Esophagus muscularis mucosa (tissue), 4 donors: ENCODE measurements at regions of chr9 and their contacts with region 1.

Region 1: GRCh38 chr9:112717661-112718341 is at the start of gene INIP:
- DNase-seq: peak; percentile 98
- H3K4me3 ChIP-seq: peak within 1 kb of the TSS; percentile 70 to 96 (median 83)
- H3K27ac ChIP-seq: peak within 1 kb of the TSS; percentile 83 to 93 (median 90)
- H3K4me1 ChIP-seq: peaks cover 14 to 22% (median 15%) of the 10 kb centered on the region in 4 donors
- H3K27me3 ChIP-seq: no peaks in the 10 kb centered on the region
- CTCF ChIP-seq: no peak
- EP300 ChIP-seq: no peak
- POLR2A ChIP-seq: no peak
- total RNA-seq, gene INIP: 10.9 to 15.8 (median 11.9) TPM

Region 2: DNA sequence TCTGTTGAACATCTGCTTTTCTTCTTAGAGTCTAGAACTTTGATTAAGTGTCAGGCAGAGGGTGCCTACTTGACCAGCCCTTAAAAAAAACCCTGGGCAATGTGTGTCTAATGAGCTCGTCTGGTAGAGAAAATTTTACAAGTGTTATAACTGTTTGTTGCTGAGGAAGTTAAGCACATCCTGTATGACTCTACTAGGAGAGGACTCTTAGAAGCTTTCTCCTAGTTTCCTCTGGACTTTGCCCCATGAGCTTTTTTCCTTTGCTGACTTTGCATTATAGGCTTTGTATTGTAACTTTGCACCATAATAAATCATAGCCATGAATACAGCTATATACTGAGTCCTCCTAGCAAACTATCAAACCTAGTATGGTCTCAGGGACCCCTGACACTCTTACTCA is 1017.0 kb before region 1 on chr9:
- intact Hi-C with region 1: no loop called
- DNase-seq: no peak
- H3K4me3 ChIP-seq: no peak overlapping the region
- H3K27ac ChIP-seq: no peak overlapping the region
- H3K4me1 ChIP-seq: no peaks in the 10 kb centered on the region
- H3K27me3 ChIP-seq: no peaks in the 10 kb centered on the region
- CTCF ChIP-seq: no peak
- EP300 ChIP-seq: no peak
- POLR2A ChIP-seq: no peak

Region 3: DNA sequence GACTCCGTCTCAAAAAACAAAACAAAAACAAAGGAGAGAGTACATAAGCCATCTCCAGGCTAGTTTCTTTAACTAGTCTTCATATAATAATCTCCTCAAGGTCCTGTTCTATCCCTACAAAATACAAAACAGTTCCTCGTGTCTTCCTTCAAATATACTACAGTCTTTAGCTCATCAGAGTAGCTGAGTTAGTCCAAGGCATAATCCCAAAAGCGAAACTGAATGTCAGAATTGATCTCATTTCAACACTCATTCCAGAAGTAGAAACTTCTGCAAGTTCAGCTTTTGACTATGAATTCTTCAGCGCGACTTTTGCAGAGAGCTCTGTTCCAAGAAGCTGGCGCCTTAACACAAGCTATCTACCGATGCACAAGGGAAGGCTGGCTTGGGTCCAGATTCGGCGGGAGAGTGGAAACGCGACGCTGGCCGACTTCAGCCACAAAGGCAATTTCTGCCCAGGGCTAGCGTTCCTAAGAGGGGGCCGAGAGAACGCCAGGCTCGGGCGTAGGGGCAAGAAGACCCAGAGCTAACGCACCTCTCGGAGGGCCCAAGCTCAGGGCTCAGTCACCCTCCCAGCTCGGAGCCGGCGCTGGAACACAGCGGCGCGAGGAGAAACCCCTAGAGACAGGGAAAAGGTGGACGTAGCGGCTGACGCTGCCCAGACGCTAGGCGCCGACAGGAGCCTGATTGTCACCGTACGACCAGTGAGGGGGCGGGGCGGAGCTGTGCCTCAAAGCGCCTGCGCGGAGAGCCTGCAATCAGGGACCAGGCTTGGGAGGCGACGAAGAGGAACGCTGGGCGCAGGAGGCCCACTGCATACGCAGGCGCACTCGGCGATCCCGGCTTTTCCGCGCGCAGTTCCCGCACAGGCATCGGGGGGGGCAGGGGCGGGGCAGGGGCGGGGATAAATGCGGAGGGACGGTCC is 338.4 kb before region 1 on chr9:
- intact Hi-C with region 1: loop called (anchors 5 kb)
- DNase-seq: peak; percentile 100
- H3K4me3 ChIP-seq: peak overlapping the region; percentile 65 to 99 (median 84)
- H3K27ac ChIP-seq: peak overlapping the region; percentile 95 to 99 (median 98)
- H3K4me1 ChIP-seq: peaks cover 39 to 61% (median 58%) of the 10 kb centered on the region in 4 donors
- H3K27me3 ChIP-seq: no peaks in the 10 kb centered on the region
- CTCF ChIP-seq: peak in 1 of 3 experiments; percentile 23
- EP300 ChIP-seq: no peak
- POLR2A ChIP-seq: peak; percentile 83

Region 4: DNA sequence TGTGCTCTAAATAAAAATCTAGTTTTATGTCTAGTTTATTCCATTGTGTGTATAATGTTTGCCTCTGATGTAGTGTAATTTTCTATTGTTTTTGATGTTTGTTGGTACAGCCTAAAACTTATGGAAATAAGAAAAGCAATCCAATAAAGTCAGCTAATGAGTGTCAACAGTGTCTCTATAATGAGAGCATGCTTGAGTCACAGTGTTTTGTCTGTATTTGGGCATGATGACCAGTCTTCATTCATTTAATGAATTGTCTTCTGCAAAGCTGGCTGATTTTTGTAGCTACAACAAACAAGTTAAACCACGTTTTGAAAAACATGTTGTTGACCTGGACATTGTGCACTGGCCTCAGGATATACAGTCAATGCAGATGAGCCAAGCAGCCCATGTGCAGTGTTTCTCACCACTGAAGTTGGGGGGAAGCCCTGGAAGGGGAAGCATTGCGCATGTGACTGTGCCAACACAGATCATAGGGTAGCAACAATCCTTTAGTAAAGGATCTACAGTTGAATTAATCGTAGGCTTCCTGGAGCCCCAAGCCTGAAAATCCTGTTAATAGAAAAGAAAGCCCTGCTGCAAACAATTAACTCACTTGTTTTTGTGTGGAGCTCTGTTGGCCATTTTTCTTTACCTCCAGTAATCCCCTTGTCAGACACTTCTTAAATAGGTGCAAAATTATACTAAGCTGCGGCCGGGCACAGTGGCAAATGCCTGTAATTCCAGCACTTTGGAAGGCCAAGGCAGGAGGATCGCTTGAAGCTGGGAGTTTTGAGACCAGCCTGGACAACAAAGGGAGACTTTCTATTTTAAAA is 87.9 kb before region 1 on chr9:
- intact Hi-C with region 1: no loop called
- DNase-seq: no peak
- H3K4me3 ChIP-seq: no peak overlapping the region
- H3K27ac ChIP-seq: no peak overlapping the region
- H3K4me1 ChIP-seq: peaks cover 0 to 11% (median 4%) of the 10 kb centered on the region in 4 donors
- H3K27me3 ChIP-seq: no peaks in the 10 kb centered on the region
- CTCF ChIP-seq: no peak
- EP300 ChIP-seq: no peak
- POLR2A ChIP-seq: no peak

Region 5: DNA sequence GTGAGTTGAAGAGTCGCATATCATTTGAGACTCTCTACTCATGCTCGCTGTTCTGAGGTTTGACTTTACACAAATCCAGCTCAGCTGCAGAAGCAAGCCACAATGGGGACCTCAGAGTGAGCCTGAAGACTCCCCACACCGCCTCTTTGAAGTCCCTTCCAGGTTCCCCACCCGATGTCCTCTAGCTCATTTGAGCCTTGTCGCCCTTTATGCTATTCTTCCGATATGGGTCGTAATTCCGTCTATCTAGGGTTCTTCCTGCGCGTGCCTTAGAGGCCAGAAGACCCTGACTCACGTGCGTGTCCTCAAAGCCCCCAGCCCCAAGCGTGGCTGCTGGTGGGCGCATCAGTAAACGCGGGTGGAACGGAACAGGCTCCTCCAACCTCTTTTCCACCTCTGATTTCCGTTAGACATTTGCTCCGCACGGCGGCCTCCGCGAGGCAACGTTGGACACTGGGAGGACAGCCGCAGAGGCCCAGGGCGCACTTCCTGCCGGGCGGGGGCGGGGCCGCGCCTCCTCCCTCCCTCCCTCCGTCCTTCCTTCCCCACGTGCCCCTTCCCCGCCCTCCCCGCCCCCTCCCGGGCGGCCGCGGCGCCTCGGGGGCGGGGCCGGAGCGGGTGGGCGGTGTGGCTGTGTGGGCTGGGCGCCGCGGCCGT is 32.4 kb after region 1 on chr9 and contains the start of gene SNX30:
- intact Hi-C with region 1: loop called (anchors 2 kb)
- DNase-seq: peak; percentile 95
- H3K4me3 ChIP-seq: peak within 1 kb of the TSS; percentile 75 to 97 (median 90)
- H3K27ac ChIP-seq: peak within 1 kb of the TSS; percentile 84 to 87 (median 86)
- H3K4me1 ChIP-seq: peaks cover 26 to 52% (median 50%) of the 10 kb centered on the region in 4 donors
- H3K27me3 ChIP-seq: no peaks in the 10 kb centered on the region
- CTCF ChIP-seq: peak in 2 of 3 experiments; percentile 14 to 16
- EP300 ChIP-seq: no peak
- POLR2A ChIP-seq: peak; percentile 33
- total RNA-seq, gene SNX30: 7.1 to 10.5 (median 8.9) TPM

Region 6: GRCh38 chr9:112793213-112793810 is 75.5 kb after region 1 on chr9:
- intact Hi-C with region 1: loop called (anchors 5 kb)
- DNase-seq: no peak
- H3K4me3 ChIP-seq: no peak overlapping the region
- H3K27ac ChIP-seq: no peak overlapping the region
- H3K4me1 ChIP-seq: peaks cover 0 to 28% (median 24%) of the 10 kb centered on the region in 4 donors
- H3K27me3 ChIP-seq: no peaks in the 10 kb centered on the region
- CTCF ChIP-seq: peak; percentile 62 to 75 (median 67)
- EP300 ChIP-seq: no peak
- POLR2A ChIP-seq: no peak

Region 7: DNA sequence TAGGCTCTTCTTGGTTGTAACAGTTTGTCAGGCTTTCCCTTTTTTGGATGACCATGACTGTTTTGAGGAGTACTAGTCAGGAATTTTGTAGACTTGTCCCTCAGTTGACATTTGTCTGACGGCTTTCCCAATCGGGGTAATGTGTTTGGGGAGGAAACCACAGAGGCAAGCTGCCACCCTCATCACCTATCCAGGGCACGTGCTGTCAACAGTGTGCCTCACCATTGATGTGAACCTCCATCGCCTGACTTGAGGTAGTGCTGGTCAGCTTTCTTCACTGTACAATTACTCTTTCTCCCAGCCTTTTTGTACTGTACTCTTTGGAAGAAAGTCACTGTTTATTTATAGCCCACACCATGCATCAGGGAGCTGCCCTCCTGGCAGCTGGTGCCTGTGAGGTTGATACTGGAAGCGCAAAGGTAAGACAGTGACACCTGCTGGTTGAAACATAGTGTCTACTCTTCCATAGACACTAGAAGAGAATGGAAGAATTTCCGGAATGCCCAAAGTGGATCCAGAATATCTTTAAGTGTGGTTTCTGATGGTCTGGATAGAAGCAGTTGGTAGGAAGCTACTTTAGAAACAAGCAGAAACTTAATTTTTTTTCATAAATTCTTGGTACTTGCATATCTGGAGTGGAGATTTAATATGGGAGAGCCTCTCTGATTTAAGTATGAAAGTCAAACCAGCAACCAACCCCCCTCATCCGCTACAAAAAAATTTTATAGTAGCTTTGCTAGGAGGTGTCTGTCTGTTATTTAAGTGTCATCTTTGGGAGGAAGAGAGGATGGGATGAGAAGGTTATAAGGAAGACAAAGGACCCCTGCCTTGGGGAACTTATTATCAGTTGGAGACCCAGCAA is 102.1 kb after region 1 on chr9:
- intact Hi-C with region 1: loop called (anchors 5 kb)
- DNase-seq: peak; percentile 75
- H3K4me3 ChIP-seq: no peak overlapping the region
- H3K27ac ChIP-seq: no peak overlapping the region
- H3K4me1 ChIP-seq: peaks cover 5 to 13% (median 8%) of the 10 kb centered on the region in 4 donors
- H3K27me3 ChIP-seq: no peaks in the 10 kb centered on the region
- CTCF ChIP-seq: peak; percentile 67 to 72 (median 69)
- EP300 ChIP-seq: no peak
- POLR2A ChIP-seq: no peak

Region 8: DNA sequence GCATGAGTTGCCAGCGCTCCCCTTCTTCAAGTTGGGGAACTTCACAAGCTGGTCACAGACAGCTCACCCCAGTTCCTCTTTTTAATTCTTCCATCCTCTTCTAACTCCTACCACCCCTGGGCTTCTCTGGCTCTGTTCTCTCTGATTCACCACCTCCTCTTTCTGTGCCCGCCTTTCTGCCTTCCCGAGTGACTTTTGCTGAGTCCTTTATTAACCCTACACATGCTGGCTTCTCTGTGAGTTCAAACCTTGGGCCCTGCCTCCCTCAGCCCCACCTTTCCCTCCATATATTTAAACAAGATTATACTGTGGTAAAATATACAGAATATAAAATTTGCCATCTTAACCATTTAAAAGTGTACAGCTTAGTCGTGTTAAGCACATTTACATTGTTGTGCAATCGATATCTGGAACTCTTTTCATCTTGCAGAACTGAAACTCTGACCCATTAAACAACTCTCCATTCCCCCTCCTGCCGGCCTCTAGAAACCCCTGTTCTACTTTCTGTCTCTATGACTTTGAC is 140.9 kb after region 1 on chr9:
- intact Hi-C with region 1: no loop called
- DNase-seq: no peak
- H3K4me3 ChIP-seq: no peak overlapping the region
- H3K27ac ChIP-seq: no peak overlapping the region
- H3K4me1 ChIP-seq: peaks cover 0 to 2% (median 0%) of the 10 kb centered on the region in 4 donors
- H3K27me3 ChIP-seq: no peaks in the 10 kb centered on the region
- CTCF ChIP-seq: no peak
- EP300 ChIP-seq: no peak
- POLR2A ChIP-seq: no peak